B cell (primary cell): ENCODE measurements at regions of chr1 and their contacts with region 1.

Region 1: DNA sequence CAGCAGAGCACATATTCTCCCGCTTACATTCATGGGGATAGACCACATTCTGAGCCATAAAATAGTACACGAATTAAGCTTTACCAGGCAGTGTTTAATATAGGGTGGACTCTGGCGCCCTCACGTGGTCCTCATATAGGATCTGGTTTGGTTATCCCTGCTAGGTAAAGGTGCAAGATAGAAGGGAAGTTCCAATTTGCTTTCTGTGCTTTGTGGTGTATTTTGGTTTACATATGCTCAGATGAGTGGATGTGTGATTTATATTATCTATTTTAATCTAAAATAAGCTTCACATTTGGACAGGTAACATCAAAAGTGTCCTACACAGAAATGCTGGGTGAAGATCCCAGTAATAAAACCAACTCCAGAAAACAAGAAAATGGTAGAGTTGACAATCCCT is 3.6 kb downstream of the CR1 start:
- DNase-seq: peak; percentile 87
- ATAC-seq: peak; percentile 60
- H3K4me3 ChIP-seq: no peak overlapping the region
- H3K4me3 Mint-ChIP-seq: no peak overlapping the region
- H3K27ac ChIP-seq: no peak overlapping the region
- H3K27ac Mint-ChIP-seq: peak overlapping the region; percentile 60
- H3K4me1 ChIP-seq: peaks cover 26 to 31% of the 10 kb centered on the region in 2 donors
- H3K4me1 Mint-ChIP-seq: peaks cover 42% of the 10 kb centered on the region
- H3K27me3 ChIP-seq: no peaks in the 10 kb centered on the region
- H3K27me3 Mint-ChIP-seq: no peaks in the 10 kb centered on the region
- CTCF ChIP-seq: peak; percentile 96

Region 2: GRCh38 chr1:207052911-207053769 is 446.4 kb before region 1 on chr1 and contains the start of gene PFKFB2:
- CTCF ChIA-PET with region 1: interaction called, 17 read pairs
- POLR2A ChIA-PET with region 1: interaction called, 3 read pairs
- intact Hi-C with region 1: loop called (anchors 1 kb)
- DNase-seq: peak; percentile 98
- ATAC-seq: peak; percentile 87
- H3K4me3 ChIP-seq: peak within 1 kb of the TSS; percentile 53 to 92 (median 73)
- H3K4me3 Mint-ChIP-seq: peak within 1 kb of the TSS; percentile 99
- H3K27ac ChIP-seq: peak within 1 kb of the TSS; percentile 87 to 96
- H3K27ac Mint-ChIP-seq: peak within 1 kb of the TSS; percentile 99
- H3K4me1 ChIP-seq: peaks cover 39 to 42% of the 10 kb centered on the region in 2 donors
- H3K4me1 Mint-ChIP-seq: peaks cover 53% of the 10 kb centered on the region
- H3K27me3 ChIP-seq: no peaks in the 10 kb centered on the region
- H3K27me3 Mint-ChIP-seq: no peaks in the 10 kb centered on the region
- CTCF ChIP-seq: peak; percentile 10
- total RNA-seq, gene PFKFB2: 15.6 and 18.2 TPM in 2 replicates

Region 3: DNA sequence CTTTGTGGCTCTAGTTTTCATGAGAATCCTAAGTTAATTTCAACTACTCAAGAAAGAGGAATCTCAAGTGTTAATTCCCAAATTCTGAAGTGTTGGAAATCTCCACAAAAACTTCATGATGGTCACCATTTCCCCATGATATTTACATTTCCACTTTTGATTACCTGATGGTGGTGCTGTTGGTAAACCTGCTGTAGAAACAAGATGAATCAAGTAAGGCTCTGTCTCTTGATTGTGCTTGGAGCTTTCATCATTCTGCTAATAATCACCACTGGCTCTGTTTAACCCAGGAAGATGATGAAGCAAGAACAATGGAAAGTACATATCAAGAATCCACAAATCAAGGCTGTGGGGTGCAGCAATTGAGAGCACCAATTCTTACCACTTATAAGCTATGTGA is 317.7 kb before region 1 on chr1:
- CTCF ChIA-PET with region 1: interaction called, 39 read pairs
- POLR2A ChIA-PET with region 1: no interaction called
- intact Hi-C with region 1: loop called (anchors 1 kb)
- DNase-seq: peak; percentile 54
- ATAC-seq: no peak
- H3K4me3 ChIP-seq: no peak overlapping the region
- H3K4me3 Mint-ChIP-seq: no peak overlapping the region
- H3K27ac ChIP-seq: no peak overlapping the region
- H3K27ac Mint-ChIP-seq: no peak overlapping the region
- H3K4me1 ChIP-seq: no peaks in the 10 kb centered on the region
- H3K4me1 Mint-ChIP-seq: peaks cover 11% of the 10 kb centered on the region
- H3K27me3 ChIP-seq: no peaks in the 10 kb centered on the region
- H3K27me3 Mint-ChIP-seq: peaks cover 6% of the 10 kb centered on the region
- CTCF ChIP-seq: peak; percentile 43

Region 4: GRCh38 chr1:207240325-207241095 is 259.1 kb before region 1 on chr1:
- CTCF ChIA-PET with region 1: no interaction called
- POLR2A ChIA-PET with region 1: no interaction called
- intact Hi-C with region 1: no loop called
- DNase-seq: no peak
- ATAC-seq: no peak
- H3K4me3 ChIP-seq: no peak overlapping the region
- H3K4me3 Mint-ChIP-seq: no peak overlapping the region
- H3K27ac ChIP-seq: no peak overlapping the region
- H3K27ac Mint-ChIP-seq: no peak overlapping the region
- H3K4me1 ChIP-seq: no peaks in the 10 kb centered on the region
- H3K4me1 Mint-ChIP-seq: no peaks in the 10 kb centered on the region
- H3K27me3 ChIP-seq: no peaks in the 10 kb centered on the region
- H3K27me3 Mint-ChIP-seq: peaks cover 3% of the 10 kb centered on the region
- CTCF ChIP-seq: no peak

Region 5: DNA sequence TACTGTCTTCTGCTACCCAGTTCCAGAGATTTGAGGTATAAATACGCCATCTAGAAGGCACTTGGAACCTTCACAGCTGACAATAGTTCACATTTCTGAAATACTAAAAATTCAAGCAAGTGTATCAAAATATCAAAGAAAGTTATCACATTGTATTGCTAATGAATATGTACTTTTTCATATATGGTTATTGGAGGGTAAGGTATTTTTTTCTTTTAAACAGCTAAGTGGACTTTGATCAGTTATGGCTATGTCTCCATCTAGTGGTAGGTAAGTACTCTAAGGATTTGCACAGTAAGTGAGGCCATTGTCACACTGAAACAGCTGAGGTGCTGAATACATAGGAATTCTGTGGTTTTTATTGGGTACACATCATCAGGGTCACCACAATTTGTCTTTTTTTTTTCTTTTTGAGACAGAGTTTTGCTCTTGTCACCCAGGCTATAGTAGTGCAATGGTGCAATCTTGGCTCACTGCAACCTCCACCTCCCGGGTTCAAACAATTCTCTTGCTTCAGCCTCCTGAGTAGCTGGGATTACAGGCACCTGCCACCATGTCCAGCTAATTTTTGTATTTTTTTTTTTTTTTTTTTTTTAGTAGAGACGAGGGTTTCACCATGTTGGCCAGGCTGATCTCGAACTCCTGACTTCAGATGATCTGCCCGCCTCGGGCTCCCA is 94.6 kb before region 1 on chr1:
- CTCF ChIA-PET with region 1: interaction called, 108 read pairs
- POLR2A ChIA-PET with region 1: interaction called, 5 read pairs
- intact Hi-C with region 1: loop called (anchors 1 kb)
- DNase-seq: peak; percentile 77
- ATAC-seq: peak; percentile 71
- H3K4me3 ChIP-seq: no peak overlapping the region
- H3K4me3 Mint-ChIP-seq: no peak overlapping the region
- H3K27ac ChIP-seq: no peak overlapping the region
- H3K27ac Mint-ChIP-seq: peak overlapping the region; percentile 74
- H3K4me1 ChIP-seq: peaks cover 18 to 27% of the 10 kb centered on the region in 2 donors
- H3K4me1 Mint-ChIP-seq: peaks cover 30% of the 10 kb centered on the region
- H3K27me3 ChIP-seq: no peaks in the 10 kb centered on the region
- H3K27me3 Mint-ChIP-seq: no peaks in the 10 kb centered on the region
- CTCF ChIP-seq: peak; percentile 92

Region 6: GRCh38 chr1:207454046-207454964 is 45.3 kb before region 1 on chr1 and contains the start of gene CR2:
- CTCF ChIA-PET with region 1: interaction called, 37 read pairs
- POLR2A ChIA-PET with region 1: interaction called, 7 read pairs
- intact Hi-C with region 1: loop called (anchors 1 kb)
- DNase-seq: peak; percentile 89
- ATAC-seq: peak; percentile 92
- H3K4me3 ChIP-seq: peak within 1 kb of the TSS; percentile 75 to 90 (median 84)
- H3K4me3 Mint-ChIP-seq: peak within 1 kb of the TSS; percentile 86
- H3K27ac ChIP-seq: peak within 1 kb of the TSS; percentile 69 to 82
- H3K27ac Mint-ChIP-seq: peak within 1 kb of the TSS; percentile 79
- H3K4me1 ChIP-seq: peaks cover 44 to 46% of the 10 kb centered on the region in 2 donors
- H3K4me1 Mint-ChIP-seq: peaks cover 15% of the 10 kb centered on the region
- H3K27me3 ChIP-seq: no peaks in the 10 kb centered on the region
- H3K27me3 Mint-ChIP-seq: no peaks in the 10 kb centered on the region
- CTCF ChIP-seq: peak; percentile 75
- total RNA-seq, gene CR2: 28.1 and 30.5 TPM in 2 replicates

Region 7: GRCh38 chr1:207633204-207633603 is 133.6 kb after region 1 on chr1:
- CTCF ChIA-PET with region 1: no interaction called
- POLR2A ChIA-PET with region 1: no interaction called
- intact Hi-C with region 1: no loop called
- DNase-seq: no peak
- ATAC-seq: no peak
- H3K4me3 ChIP-seq: no peak overlapping the region
- H3K4me3 Mint-ChIP-seq: no peak overlapping the region
- H3K27ac ChIP-seq: no peak overlapping the region
- H3K27ac Mint-ChIP-seq: no peak overlapping the region
- H3K4me1 ChIP-seq: no peaks in the 10 kb centered on the region
- H3K4me1 Mint-ChIP-seq: no peaks in the 10 kb centered on the region
- H3K27me3 ChIP-seq: no peaks in the 10 kb centered on the region
- H3K27me3 Mint-ChIP-seq: no peaks in the 10 kb centered on the region
- CTCF ChIP-seq: no peak